IMR-90 (cell line): ENCODE measurements at regions of chr6 and their contacts with region 1.

Region 1: GRCh38 chr6:137728385-137729349 is 138.4 kb upstream of the TNFAIP3 start:
- DNase-seq: peak; percentile 88
- ATAC-seq: peak; percentile 60
- H3K4me3 ChIP-seq: no peak overlapping the region
- H3K27ac ChIP-seq: peak overlapping the region; percentile 46; the same call in 1 of the 2 replicates
- H3K4me1 ChIP-seq: peaks cover 19% of the 10 kb centered on the region
- H3K27me3 ChIP-seq: no peaks in the 10 kb centered on the region
- CTCF ChIP-seq: no peak
- POLR2A ChIP-seq: no peak
- RAD21 ChIP-seq: 0 out of 2 replicates have a peak, but pooled peaks have one; percentile 7

Region 2: GRCh38 chr6:137415127-137415833 is 313.4 kb before region 1 on chr6:
- CTCF ChIA-PET with region 1: no interaction called
- POLR2A ChIA-PET with region 1: no interaction called
- dilution Hi-C with region 1: no loop called
- in situ Hi-C with region 1: no loop called
- intact Hi-C with region 1: no loop called
- DNase-seq: peak; percentile 53
- ATAC-seq: peak; percentile 95
- H3K4me3 ChIP-seq: peak overlapping the region; percentile 49
- H3K27ac ChIP-seq: no peak overlapping the region
- H3K4me1 ChIP-seq: no peaks in the 10 kb centered on the region
- H3K27me3 ChIP-seq: peaks cover 17% of the 10 kb centered on the region
- CTCF ChIP-seq: peak; percentile 60
- POLR2A ChIP-seq: no peak
- RAD21 ChIP-seq: peak; percentile 45

Region 3: DNA sequence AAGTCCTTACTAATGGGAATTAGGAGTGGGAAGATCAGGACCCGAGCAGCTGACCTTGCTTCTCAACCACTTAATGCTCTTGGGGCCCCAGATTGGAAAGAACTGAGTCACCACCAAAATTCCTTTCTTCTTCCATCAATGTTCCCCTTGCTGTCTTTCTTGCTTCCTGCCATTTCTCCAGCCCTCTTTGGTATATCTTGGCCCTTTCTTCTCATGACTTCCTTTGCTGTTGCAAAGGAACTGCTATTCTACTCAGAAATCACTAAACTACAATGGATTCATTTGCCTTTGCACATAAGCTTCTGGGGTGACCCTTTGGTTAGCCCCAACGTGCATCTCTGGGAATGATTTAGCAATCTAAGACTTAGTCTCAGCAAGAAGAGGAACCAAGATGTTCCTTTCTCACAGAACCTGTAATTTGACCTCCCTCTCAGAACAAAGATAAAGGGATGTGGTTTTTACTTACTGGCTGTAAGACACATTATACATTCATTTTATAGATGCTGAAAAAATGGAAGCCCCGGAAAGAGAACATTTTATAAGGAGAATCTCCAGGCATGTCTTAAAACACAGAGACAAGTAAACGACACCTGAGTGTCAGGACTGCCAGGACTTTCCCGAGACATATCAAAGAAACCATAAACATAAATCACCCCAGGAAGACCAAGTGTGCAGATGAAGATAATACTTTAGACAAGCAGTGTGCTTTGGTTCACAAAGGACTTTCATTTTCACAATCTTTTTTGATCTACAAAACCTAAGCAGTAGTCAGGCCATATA is 39.4 kb after region 1 on chr6:
- CTCF ChIA-PET with region 1: no interaction called
- POLR2A ChIA-PET with region 1: no interaction called
- dilution Hi-C with region 1: no loop called
- in situ Hi-C with region 1: no loop called
- intact Hi-C with region 1: loop called (anchors 5 kb)
- DNase-seq: peak; percentile 64
- ATAC-seq: no peak
- H3K4me3 ChIP-seq: no peak overlapping the region
- H3K27ac ChIP-seq: no peak overlapping the region
- H3K4me1 ChIP-seq: peaks cover 11% of the 10 kb centered on the region; the same call in 1 of the 2 replicates
- H3K27me3 ChIP-seq: no peaks in the 10 kb centered on the region
- CTCF ChIP-seq: no peak
- POLR2A ChIP-seq: no peak
- RAD21 ChIP-seq: no peak

Region 4: GRCh38 chr6:137873273-137873762 is 144.7 kb after region 1 on chr6:
- CTCF ChIA-PET with region 1: no interaction called
- POLR2A ChIA-PET with region 1: no interaction called
- dilution Hi-C with region 1: no loop called
- in situ Hi-C with region 1: no loop called
- intact Hi-C with region 1: loop called (anchors 5 kb)
- DNase-seq: peak; percentile 92
- ATAC-seq: peak; percentile 77
- H3K4me3 ChIP-seq: peak overlapping the region; percentile 24; the same call in 1 of the 2 replicates
- H3K27ac ChIP-seq: no peak overlapping the region
- H3K4me1 ChIP-seq: peaks cover 15% of the 10 kb centered on the region
- H3K27me3 ChIP-seq: no peaks in the 10 kb centered on the region
- CTCF ChIP-seq: no peak
- POLR2A ChIP-seq: no peak
- RAD21 ChIP-seq: no peak